ENCODE measurements at regions of chr22 and their contacts with region 1.

Region 1: DNA sequence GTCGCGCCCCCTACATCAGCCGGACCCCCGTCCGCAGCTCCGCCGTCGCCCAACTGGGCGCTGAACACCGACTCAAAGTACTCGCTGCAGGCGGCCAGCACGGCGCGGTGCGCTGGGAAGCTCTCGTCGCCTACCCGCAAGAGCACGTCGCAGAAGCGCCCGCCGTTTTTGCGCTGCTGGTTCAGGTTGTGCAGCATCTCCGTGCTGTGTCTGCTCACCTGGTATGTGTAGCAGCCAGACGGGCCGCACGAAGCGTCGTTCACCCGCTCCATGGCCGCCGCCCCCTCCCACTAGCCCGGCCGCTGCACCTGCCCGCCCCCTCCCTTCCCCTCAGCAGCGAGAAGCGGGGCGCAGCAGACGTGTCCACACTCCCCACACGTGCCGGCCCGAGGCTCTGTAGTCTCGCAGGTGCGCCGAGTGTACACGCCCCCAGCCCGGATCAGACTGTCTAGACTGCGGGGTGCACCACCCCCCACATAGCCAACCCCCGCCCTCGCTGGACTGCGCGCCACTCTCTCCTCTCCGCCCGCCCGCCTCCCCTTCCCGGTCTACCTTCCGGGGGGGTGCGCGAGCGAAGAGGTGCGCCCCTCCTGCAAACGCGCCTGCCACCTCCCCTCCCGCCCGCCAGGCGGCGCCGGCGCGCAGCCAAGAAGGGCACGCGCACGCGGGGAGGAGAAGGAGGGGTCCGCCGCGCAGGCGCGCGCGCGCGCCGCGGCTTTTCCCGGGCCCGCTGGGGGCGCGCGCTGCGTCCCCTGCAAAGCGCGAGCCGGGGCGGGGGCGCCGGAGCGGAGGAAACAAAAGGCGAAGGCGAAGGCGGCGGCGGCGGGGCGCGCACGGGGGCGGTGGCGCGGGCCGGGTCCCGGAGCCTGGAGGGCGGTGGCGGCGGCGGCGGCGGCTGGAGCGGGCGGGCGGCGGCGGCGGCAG is 553 bp downstream of the PATZ1 start:
- DNase-seq: peak; percentile 62 to 79
- ATAC-seq: peak; percentile 7 to 9; a peak in 3 of 6 replicates
- H3K4me3 ChIP-seq: peak overlapping the region; percentile 73
- H3K27ac ChIP-seq: peak overlapping the region; percentile 96 to 100
- H3K4me1 ChIP-seq: peaks cover 29% of the 10 kb centered on the region
- CTCF ChIP-seq: peak; percentile 61
- EP300 ChIP-seq: no peak
- POLR2A ChIP-seq: no peak
- RAD21 ChIP-seq: peak; percentile 16 to 30; a peak in 2 of 5 replicates

Region 2: GRCh38 chr22:31080848-31081649 is 264.5 kb before region 1 on chr22 and contains the start of gene SMTN:
- CTCF ChIA-PET with region 1: no interaction called
- POLR2A ChIA-PET with region 1: no interaction called
- DNase-seq: peak; percentile 80 to 82
- ATAC-seq: peak; percentile 80 to 86
- H3K4me3 ChIP-seq: peak within 1 kb of the TSS; percentile 95
- H3K27ac ChIP-seq: peak within 1 kb of the TSS; percentile 92 to 94
- H3K4me1 ChIP-seq: peaks cover 26% of the 10 kb centered on the region
- CTCF ChIP-seq: no peak
- EP300 ChIP-seq: no peak
- POLR2A ChIP-seq: peak; percentile 73; the same call in 1 of the 2 replicates
- RAD21 ChIP-seq: 0 out of 5 replicates have a peak, but pooled peaks of 1 of the 2 experiments have one; percentile 10
- polyA plus RNA-seq, gene SMTN: 7.0 and 12.7 TPM in 2 replicates

Region 3: GRCh38 chr22:31290494-31291471 is 54.8 kb before region 1 on chr22:
- CTCF ChIA-PET with region 1: interaction called, 4 read pairs
- POLR2A ChIA-PET with region 1: interaction called, 11 read pairs
- DNase-seq: peak; percentile 78 to 89
- ATAC-seq: peak; percentile 95 to 97
- H3K4me3 ChIP-seq: peak overlapping the region; percentile 50
- H3K27ac ChIP-seq: peak overlapping the region; percentile 59 to 84; a peak in 5 of 6 replicates
- H3K4me1 ChIP-seq: peaks cover 20% of the 10 kb centered on the region
- CTCF ChIP-seq: no peak
- EP300 ChIP-seq: no peak
- POLR2A ChIP-seq: no peak
- RAD21 ChIP-seq: no peak

Region 4: DNA sequence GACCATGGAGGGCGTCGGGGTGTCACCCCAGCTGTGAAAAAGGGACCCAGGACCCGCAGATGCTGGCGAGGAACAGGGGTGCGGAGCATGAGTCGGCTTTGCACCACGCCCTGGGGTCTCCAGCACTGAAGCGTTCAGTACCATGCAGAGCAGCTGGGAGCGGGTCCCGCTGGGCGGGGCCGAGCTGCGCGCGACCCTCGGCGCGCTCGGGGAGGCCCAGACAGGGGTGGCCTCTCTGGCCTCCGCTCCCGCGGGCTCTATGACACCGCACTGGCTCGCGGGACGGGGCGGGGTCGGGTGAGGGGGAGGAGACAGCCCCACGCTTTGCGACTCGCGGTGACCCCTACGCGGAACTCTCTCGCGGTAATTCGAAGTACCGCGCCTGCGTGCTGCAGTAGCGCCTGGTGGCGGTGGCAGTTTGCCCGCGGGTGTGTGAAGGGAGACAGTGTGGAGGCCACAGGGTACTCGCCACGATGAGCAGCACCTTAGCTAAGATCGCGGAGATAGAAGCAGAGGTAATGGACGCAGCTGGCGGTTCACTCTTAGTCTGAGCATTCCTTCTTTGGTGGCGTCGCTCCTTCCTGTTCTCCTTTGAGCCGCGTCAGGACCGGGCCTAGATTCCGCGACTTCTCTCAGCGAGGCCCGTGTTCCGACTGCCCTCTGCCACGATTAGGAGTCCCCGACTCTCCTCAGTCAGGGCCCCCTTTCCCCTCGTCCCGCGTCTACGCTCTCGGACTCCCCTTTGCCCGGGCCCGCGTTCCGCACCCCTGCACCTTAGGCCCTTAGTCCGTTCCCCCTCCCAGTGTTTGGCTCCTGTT is 53.8 kb after region 1 on chr22 and contains the start of gene DRG1:
- CTCF ChIA-PET with region 1: no interaction called
- POLR2A ChIA-PET with region 1: interaction called, 31 read pairs
- DNase-seq: peak; percentile 85 to 92
- ATAC-seq: peak; percentile 99
- H3K4me3 ChIP-seq: peak within 1 kb of the TSS; percentile 86
- H3K27ac ChIP-seq: peak within 1 kb of the TSS; percentile 93 to 96
- H3K4me1 ChIP-seq: no peaks in the 10 kb centered on the region
- CTCF ChIP-seq: no peak
- EP300 ChIP-seq: no peak
- POLR2A ChIP-seq: peak; percentile 76
- RAD21 ChIP-seq: no peak
- polyA plus RNA-seq, gene DRG1: 76.1 and 77.5 TPM in 2 replicates

Measured in A549 (cell line).